ENCODE measurements at regions of chr13 and their contacts with region 1.

Region 1: DNA sequence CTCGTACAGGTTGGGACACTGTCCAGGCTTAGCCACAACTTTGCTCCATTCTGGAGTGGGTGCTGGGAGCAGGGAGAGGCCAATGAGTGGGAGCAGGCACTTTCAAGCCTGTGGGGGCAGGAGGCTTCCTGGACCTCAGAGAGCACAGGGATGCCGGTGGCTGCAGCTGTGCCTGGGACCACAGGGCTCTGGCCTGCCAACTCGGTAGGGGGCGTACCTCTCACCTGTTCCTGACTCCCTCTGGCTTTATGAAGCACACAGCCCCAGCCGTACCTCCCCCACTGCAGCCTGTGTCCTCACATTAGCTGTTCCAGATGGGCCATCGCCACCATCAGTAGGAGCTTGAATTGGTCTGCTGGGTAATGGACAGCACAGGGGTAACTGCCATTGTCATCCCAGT is 278.7 kb upstream of the KLHL1 start:
- DNase-seq: no peak
- H3K4me3 ChIP-seq: no peak overlapping the region
- H3K27ac ChIP-seq: no peak overlapping the region
- H3K4me1 ChIP-seq: no peaks in the 10 kb centered on the region
- H3K27me3 ChIP-seq: no peaks in the 10 kb centered on the region
- CTCF ChIP-seq: no peak

Region 2: GRCh38 chr13:70430256-70430655 is 43.3 kb after region 1 on chr13:
- CTCF ChIA-PET with region 1: no interaction called
- dilution Hi-C with region 1: loop called (anchors 5 kb)
- in situ Hi-C with region 1: no loop called
- intact Hi-C with region 1: no loop called
- DNase-seq: no peak
- H3K4me3 ChIP-seq: no peak overlapping the region
- H3K27ac ChIP-seq: no peak overlapping the region
- H3K4me1 ChIP-seq: no peaks in the 10 kb centered on the region
- H3K27me3 ChIP-seq: no peaks in the 10 kb centered on the region
- CTCF ChIP-seq: no peak